ENCODE measurements at regions of chr2 and their contacts with region 1.

Region 1: GRCh38 chr2:206635031-206635430 is 7.3 kb upstream of the FAM237A start:
- DNase-seq: no peak
- H3K4me3 ChIP-seq: no peak overlapping the region
- H3K27ac ChIP-seq: no peak overlapping the region
- H3K4me1 ChIP-seq: no peaks in the 10 kb centered on the region
- H3K27me3 ChIP-seq: peaks cover 26% of the 10 kb centered on the region
- CTCF ChIP-seq: no peak

Region 2: GRCh38 chr2:205024822-205025518 is 1610.1 kb before region 1 on chr2:
- CTCF ChIA-PET with region 1: no interaction called
- POLR2A ChIA-PET with region 1: interaction called, 17 read pairs
- intact Hi-C with region 1: no loop called
- DNase-seq: peak; percentile 42
- H3K4me3 ChIP-seq: no peak overlapping the region
- H3K27ac ChIP-seq: no peak overlapping the region
- H3K4me1 ChIP-seq: no peaks in the 10 kb centered on the region
- H3K27me3 ChIP-seq: no peaks in the 10 kb centered on the region
- CTCF ChIP-seq: no peak